ENCODE measurements at regions of chr12 and their contacts with region 1.

Region 1: GRCh38 chr12:62660756-62661155 is 194.1 kb downstream of the MON2 start:
- DNase-seq: no peak
- H3K4me3 ChIP-seq: no peak overlapping the region
- H3K27ac ChIP-seq: no peak overlapping the region
- H3K4me1 ChIP-seq: no peaks in the 10 kb centered on the region
- H3K27me3 ChIP-seq: no peaks in the 10 kb centered on the region
- CTCF ChIP-seq: no peak
- POLR2A ChIP-seq: no peak

Region 2: GRCh38 chr12:62684570-62685295 is 24.0 kb after region 1 on chr12:
- intact Hi-C with region 1: loop called (anchors 1 kb)
- DNase-seq: peak in 1 of 2 donors; percentile 93
- H3K4me3 ChIP-seq: no peak overlapping the region
- H3K27ac ChIP-seq: peak overlapping the region; percentile 85
- H3K4me1 ChIP-seq: peaks cover 25% of the 10 kb centered on the region
- H3K27me3 ChIP-seq: no peaks in the 10 kb centered on the region
- CTCF ChIP-seq: no peak
- POLR2A ChIP-seq: no peak

Region 3: DNA sequence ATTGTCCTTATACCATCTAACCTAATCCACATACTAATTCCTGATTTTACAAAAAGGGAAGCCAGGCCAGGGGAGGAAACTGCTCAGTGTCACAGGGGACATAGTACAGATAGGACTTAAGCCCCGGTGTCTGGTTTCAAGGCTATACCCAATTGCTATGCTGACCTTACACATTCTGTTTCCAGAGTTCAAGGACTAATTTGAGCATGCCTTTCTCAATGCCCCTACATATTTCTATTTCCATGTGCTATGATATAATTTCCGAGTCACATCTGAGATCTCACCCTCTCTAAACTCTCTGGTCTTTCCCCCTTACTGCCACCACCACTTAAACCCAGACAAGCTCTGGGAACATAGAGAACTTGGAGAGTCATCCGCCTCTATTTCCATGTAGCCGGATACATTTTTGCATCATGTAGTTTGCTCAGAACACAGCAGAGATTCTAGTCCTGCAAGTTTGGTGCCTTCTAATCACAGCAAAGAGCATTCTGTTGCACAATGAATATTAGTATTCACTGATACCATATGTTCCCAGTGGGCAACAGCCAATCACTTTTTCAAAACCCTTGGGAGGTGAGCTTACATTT is 240.0 kb after region 1 on chr12:
- intact Hi-C with region 1: no loop called
- DNase-seq: no peak
- H3K4me3 ChIP-seq: no peak overlapping the region
- H3K27ac ChIP-seq: no peak overlapping the region
- H3K4me1 ChIP-seq: no peaks in the 10 kb centered on the region
- H3K27me3 ChIP-seq: no peaks in the 10 kb centered on the region
- CTCF ChIP-seq: no peak
- POLR2A ChIP-seq: no peak